PC-9 (cell line): ENCODE measurements at regions of chr21 and their contacts with region 1.

Region 1: DNA sequence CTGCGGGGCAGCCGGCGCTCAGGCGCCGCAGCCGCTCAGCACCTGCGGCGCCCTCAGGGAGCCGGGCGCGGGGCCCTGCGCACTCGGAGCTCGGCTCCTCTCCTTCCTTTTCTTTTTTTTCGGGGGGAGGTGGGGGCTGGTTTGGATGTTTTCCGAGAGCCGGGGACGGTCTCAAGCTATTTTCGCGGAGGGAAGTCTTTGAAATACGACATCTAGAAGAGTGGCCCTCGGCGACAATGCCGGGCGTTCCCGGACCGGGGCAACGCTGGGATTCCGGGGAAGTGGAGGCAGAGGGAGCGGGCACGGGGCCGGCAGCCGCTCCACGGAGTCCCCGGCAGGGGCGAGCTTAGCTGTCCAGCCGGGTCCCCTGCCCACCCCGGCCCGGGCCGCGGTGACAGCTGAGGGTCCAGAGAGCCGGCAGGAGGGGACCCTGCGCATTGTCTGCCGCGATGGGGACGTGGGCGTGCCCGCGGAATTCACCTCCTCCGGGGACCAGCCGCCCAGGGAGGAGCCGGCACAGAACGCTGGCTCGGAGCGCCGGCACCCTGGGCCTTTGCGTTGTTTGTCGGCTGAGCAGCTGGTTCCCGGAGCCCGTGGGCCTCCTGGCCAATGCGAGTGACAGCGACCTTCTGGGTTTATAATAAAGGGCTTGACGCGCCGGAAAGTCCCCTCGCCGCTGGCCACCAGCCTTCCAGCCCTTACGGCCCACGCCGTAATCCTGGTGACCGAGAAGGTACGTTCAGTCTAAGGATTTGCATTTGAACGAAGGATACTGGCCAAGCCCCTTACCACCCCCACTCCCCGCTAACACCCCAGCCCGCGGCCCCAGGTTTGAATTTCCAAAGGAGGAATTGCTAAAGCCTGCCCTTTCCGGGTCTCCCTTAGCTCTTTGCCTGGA is 582 bp downstream of the SLC37A1 start:
- DNase-seq: peak in 1 of 2 experiments; percentile 42
- H3K4me3 ChIP-seq: peak overlapping the region; percentile 71
- H3K27ac ChIP-seq: peak overlapping the region; percentile 93
- H3K4me1 ChIP-seq: peaks cover 44% of the 10 kb centered on the region
- H3K27me3 ChIP-seq: no peaks in the 10 kb centered on the region
- CTCF ChIP-seq: no peak

Region 2: DNA sequence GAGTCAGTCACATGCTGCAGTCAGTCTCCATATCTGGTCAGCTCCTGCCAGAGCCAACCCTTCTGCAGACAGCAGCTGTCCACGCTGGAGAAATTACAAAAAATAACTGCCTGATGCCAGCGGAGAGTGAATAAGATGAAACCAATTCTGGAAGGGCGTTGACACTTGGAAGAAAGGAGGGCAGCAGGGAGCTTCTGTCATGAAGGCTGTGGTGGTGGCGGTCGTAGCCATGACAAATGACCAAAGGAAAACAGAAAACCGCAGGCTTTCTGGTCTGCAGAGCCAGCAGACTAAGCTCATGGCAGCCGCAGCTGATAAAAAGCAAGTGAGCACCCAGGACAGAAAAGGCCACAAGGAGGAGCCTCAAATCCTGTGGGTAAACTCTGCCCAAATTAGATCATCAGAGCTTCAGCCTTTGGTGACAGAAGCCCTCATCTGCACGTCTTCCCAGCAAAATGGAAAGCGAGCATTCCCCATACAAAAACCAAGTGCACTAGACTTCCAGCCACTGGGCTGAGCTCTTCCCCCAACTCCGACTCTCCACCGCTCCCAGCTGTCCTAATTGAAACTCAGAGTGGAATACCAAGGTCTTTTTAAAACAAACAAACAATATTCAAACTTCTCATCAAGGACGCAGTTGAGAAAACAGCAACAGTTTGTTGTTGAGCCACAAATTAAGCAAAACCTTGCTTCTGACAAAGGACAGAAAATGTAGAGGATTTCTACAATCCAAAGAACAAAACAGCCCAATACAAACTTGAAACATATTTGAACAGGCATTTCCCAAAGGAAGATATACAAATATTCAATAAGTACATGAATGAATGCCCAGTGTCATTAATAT is 46.9 kb before region 1 on chr21:
- CTCF ChIA-PET with region 1: interaction called, 4 read pairs
- POLR2A ChIA-PET with region 1: no interaction called
- intact Hi-C with region 1: loop called (anchors 1 kb)
- DNase-seq: peak; percentile 60 to 76
- H3K4me3 ChIP-seq: no peak overlapping the region
- H3K27ac ChIP-seq: peak overlapping the region; percentile 98
- H3K4me1 ChIP-seq: peaks cover 61% of the 10 kb centered on the region
- H3K27me3 ChIP-seq: no peaks in the 10 kb centered on the region
- CTCF ChIP-seq: peak; percentile 41; the same call in 1 of the 2 replicates

Region 3: DNA sequence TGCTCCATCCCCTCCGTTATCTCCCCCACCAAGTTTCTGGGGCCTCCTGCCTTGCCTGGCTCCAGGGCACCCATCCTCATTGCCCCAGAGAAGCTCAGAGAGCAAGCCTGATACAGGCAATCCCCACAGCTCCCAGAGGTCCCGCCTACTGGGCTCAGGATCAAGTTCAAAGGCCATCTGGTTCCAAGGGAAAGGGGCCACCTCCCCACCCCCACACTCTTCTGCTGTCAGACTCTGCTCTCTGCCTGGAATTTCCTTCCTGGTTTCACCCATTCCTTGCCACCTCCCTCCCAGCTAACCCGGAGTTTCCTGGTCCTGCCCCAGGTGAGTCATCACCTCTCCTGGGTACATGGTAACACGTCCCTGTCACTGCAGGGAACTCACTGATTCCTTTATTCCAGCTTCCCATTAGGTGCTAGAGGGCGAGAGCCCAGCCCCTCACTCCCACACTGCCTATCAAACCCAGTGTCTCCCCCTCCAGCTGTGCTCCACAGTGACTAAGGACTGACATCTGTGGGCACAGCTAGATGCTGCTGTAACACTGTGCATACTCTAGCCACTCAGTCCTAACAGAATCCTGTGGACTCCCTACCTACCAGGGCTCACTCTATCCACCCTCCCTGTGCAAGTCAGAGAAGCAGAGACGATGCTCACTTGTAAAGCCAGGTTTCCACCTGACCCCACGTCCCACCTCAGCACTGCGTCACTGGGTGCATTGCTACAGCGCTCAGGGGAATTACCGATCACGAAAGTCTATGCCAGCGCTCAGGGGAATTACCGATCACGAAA is 40.0 kb before region 1 on chr21:
- CTCF ChIA-PET with region 1: no interaction called
- POLR2A ChIA-PET with region 1: no interaction called
- intact Hi-C with region 1: loop called (anchors 2 kb)
- DNase-seq: peak; percentile 82 to 95
- H3K4me3 ChIP-seq: no peak overlapping the region
- H3K27ac ChIP-seq: peak overlapping the region; percentile 79
- H3K4me1 ChIP-seq: peaks cover 32% of the 10 kb centered on the region
- H3K27me3 ChIP-seq: no peaks in the 10 kb centered on the region
- CTCF ChIP-seq: no peak

Region 4: GRCh38 chr21:42496122-42496900 is 17.9 kb before region 1 on chr21 and contains the start of gene RSPH1:
- CTCF ChIA-PET with region 1: no interaction called
- POLR2A ChIA-PET with region 1: no interaction called
- intact Hi-C with region 1: loop called (anchors 1 kb)
- DNase-seq: peak; percentile 94 to 99
- H3K4me3 ChIP-seq: peak within 1 kb of the TSS; percentile 70
- H3K27ac ChIP-seq: peak within 1 kb of the TSS; percentile 35; the same call in 1 of the 2 replicates
- H3K4me1 ChIP-seq: peaks cover 28% of the 10 kb centered on the region
- H3K27me3 ChIP-seq: no peaks in the 10 kb centered on the region
- CTCF ChIP-seq: no peak
- total RNA-seq, gene RSPH1: 4.3 and 8.0 TPM in 2 replicates